WTC11 (cell line): ENCODE measurements at regions of chr2 and their contacts with region 1.

Region 1: DNA sequence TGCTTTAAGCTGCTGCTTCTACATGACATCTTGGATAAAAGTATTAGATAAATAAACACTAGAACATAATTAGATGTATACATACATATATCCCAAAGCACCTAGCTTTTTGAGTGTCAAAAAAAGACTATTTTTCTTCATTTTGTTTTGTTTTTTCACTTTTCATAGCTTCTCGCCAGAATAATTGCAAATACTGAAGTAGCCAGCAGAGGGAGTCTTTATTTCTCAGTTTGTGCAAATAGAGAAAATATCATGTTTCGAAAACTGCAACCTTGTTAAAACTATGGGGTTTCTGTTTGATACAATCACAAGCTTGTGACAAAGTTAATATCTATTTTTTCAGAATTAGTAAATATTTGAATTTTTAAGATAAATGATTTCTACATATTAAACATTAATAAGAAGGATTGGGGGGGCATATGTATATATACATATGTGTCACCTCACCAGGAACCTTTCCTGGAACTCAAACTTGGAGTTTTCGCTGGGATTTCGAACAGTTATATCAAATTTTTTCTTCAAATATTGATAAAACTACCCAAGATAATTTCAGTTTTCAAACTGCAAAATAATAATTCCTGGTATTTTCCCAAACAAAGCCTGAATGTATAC is 61.0 kb downstream of the GRB14 start:
- DNase-seq: no peak
- ATAC-seq: no peak
- H3K4me3 Mint-ChIP-seq: no peak overlapping the region
- H3K27ac Mint-ChIP-seq: no peak overlapping the region
- H3K4me1 Mint-ChIP-seq: peaks cover 7% of the 10 kb centered on the region; the same call in 1 of the 2 replicates
- H3K27me3 Mint-ChIP-seq: no peaks in the 10 kb centered on the region
- CTCF ChIP-seq: peak; percentile 30; the same call in 1 of the 2 replicates

Region 2: DNA sequence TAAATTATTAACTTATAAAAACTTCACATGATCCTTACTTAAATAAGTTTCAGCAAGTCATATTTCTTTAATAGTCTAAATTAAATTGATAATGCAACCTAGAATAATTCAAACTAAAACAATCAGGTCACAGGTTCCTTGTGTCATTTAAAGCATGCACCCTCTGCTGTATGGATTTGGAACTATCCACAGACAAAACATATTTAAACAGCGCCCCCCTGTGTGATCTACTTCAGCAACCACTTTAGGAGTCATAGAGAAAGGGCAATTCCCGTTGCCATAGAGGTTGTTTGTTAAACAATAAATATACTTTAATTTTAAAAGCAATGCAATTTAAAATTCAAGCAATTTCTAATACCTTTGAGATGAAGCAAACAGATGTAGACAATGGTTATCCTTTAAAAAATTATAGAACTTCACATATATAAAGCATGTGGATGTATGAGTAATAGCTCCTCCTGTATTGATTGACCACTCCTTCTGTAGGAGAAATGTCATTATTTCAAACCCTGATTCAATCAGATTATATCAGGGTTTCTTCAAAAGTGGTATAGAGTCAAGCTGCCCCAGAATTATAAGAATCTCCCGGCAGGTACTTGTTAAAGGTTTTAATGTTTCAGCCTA is 39.8 kb after region 1 on chr2:
- CTCF ChIA-PET with region 1: interaction called, 17 read pairs
- POLR2A ChIA-PET with region 1: no interaction called
- DNase-seq: peak; percentile 26
- ATAC-seq: peak; percentile 96
- H3K4me3 Mint-ChIP-seq: no peak overlapping the region
- H3K27ac Mint-ChIP-seq: no peak overlapping the region
- H3K4me1 Mint-ChIP-seq: 0 out of 2 replicates have a peak, but pooled peaks cover 4% of the 10 kb centered on the region
- H3K27me3 Mint-ChIP-seq: no peaks in the 10 kb centered on the region
- CTCF ChIP-seq: peak; percentile 39; the same call in 1 of the 2 replicates